Right ventricle myocardium superior (tissue), 1 donor: ENCODE measurements at regions of chr11 and their contacts with region 1.

Region 1: GRCh38 chr11:2305140-2305840 is 3.5 kb downstream of the TSPAN32 start:
- DNase-seq: peak; percentile 94
- ATAC-seq: peak; percentile 48

Region 2: DNA sequence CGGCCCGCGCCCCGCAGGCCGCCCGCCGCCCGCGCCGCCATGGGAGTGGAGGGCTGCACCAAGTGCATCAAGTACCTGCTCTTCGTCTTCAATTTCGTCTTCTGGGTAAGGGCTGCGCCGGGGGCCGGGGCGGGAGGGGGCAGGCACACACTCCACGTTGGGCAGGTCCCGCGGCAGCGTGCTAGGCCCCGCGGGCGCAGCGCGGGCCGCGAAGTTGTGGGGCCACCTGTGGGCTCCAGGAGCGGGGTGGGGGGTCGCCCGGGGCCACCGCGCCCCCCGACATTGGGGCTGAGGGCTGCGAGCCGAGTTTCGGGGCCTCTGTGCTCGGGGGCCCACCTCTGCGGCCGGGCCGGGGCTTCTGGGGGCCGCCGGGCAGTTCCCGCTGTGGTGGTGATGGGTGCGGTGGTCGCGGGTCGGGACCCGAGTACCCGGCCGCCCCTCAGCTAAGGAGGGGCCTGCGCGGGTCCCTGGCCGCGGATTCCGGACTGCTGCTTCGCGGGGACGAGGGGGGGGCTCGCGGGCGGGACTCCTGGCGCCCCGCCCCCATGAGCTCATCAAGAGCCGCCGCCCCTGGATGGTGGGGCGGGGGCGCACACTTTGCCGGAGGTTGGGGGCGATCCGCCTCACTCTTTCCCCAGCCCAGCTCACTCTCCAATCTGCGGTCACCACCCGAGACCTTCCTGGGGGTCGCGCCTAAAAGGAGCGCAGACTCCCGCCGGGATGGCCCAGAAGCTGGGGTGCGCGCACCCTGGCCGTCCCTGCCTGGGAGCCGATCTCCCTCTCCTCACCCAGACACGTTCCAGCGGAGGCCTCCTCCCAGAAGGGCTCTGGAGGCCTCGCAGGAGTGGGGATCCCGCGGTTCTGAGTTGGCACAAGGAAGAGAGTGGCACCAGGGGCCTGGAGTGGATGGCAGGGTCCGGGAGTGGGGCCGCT is 72.5 kb after region 1 on chr11:
- intact Hi-C with region 1: loop called (anchors 5 kb)
- DNase-seq: peak; percentile 84
- ATAC-seq: peak; percentile 27

Region 3: DNA sequence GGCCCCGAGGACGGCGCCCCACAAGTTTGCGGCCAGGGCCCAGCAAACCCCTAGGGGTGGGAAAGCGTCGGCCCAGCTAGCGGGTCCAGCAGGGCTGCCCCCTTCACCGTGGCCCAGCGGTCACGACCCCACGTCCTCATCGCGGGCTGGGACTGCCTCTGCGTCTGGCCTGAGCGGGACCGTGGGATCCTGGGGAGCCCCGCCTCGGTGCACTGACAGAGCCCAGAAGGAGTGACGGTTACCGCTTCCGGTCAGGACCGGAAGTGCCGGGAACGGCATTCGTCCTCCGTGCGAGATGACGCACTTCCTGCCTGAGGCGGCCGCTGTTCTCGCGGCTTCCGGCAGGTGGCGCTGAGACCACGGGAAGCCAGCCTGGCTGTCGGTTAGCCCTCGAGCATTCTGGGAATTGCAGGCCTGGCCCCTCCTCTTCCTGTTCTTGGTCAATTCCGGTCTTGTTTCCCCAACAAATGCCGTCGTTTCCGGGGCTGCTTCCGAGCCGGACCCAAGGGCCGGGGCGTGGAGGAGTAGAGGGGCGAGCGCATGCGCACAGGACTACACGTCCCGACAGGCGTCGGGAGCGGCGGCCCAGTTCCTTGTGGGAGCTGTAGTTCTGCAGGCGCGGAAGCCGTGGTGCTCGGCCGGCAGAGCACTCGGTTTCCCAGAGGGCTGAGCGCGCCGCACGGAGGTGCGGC is 94.9 kb after region 1 on chr11 and contains the start of gene TSSC4:
- intact Hi-C with region 1: loop called (anchors 5 kb)
- DNase-seq: peak; percentile 100
- ATAC-seq: peak; percentile 93
- total RNA-seq, gene TSSC4: 36.2 TPM

Region 4: GRCh38 chr11:2420502-2421225 is 115.4 kb after region 1 on chr11:
- intact Hi-C with region 1: loop called (anchors 1 kb)
- DNase-seq: peak; percentile 83
- ATAC-seq: peak; percentile 97

Region 5: GRCh38 chr11:2459796-2460531 is 154.7 kb after region 1 on chr11:
- intact Hi-C with region 1: no loop called
- DNase-seq: peak; percentile 42
- ATAC-seq: no peak

Region 6: DNA sequence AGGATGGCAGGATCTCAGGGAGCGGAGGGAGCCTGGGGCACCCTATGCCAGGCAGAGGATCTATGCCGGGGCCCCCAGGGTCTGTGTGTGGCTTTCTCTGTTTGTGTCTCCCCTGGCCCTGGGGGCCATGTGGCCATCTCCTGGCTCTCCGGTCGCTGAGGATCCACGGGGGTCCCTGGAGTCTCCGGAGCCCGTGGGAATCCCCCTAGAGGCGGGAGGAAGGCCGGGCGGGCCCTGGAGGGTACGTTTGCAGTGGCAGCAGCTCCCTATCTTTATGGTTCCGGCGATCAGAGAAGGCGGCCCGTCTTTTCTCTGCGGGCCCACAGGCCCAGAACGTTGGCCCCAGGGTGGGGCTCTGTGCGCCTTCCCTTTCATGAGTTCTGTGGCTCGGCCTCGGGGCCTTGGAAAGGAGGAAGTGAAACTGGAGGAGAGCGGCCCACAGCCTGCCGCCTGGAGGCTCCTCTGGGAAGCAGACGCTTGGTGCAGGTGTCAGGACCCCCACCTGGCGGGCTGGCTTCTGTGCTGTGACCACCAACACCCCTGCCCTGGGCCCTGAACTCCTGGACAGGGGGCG is 221.6 kb after region 1 on chr11:
- intact Hi-C with region 1: loop called (anchors 10 kb)
- DNase-seq: peak; percentile 76
- ATAC-seq: peak; percentile 31